MCF 10A (cell line): ENCODE measurements at regions of chr22 and their contacts with region 1.

Region 1: DNA sequence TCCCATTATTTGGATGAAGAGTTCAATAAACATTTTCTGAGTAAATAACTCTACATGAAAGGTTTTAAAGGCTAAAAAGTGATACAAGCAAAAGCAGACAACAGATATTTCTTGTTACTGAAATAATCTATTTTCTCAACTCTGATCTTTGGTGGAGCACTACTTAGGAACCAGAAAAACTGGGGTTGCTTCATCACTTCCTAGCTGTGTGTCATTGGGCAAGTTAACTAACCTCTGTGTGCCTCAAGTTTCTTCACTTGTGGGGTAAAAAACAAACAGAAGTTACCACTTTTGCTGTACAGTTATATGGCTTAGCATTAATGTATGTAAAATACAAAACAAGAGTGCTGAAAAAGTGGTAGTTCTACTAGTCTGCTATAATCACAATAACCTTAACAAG is 5.6 kb downstream of the MAPK1 start:
- DNase-seq: peak; percentile 4
- H3K4me3 Mint-ChIP-seq: no peak overlapping the region
- H3K27ac Mint-ChIP-seq: peak overlapping the region; percentile 85
- H3K4me1 Mint-ChIP-seq: peaks cover 55% of the 10 kb centered on the region
- H3K27me3 Mint-ChIP-seq: no peaks in the 10 kb centered on the region
- CTCF ChIP-seq: no peak

Region 2: GRCh38 chr22:21816787-21817496 is 44.9 kb before region 1 on chr22:
- CTCF ChIA-PET with region 1: interaction called, 3 read pairs
- POLR2A ChIA-PET with region 1: interaction called, 3 read pairs
- intact Hi-C with region 1: loop called (anchors 5 kb)
- DNase-seq: peak; percentile 74
- H3K4me3 Mint-ChIP-seq: peak overlapping the region; percentile 7
- H3K27ac Mint-ChIP-seq: peak overlapping the region; percentile 91
- H3K4me1 Mint-ChIP-seq: peaks cover 26% of the 10 kb centered on the region
- H3K27me3 Mint-ChIP-seq: no peaks in the 10 kb centered on the region
- CTCF ChIP-seq: no peak

Region 3: DNA sequence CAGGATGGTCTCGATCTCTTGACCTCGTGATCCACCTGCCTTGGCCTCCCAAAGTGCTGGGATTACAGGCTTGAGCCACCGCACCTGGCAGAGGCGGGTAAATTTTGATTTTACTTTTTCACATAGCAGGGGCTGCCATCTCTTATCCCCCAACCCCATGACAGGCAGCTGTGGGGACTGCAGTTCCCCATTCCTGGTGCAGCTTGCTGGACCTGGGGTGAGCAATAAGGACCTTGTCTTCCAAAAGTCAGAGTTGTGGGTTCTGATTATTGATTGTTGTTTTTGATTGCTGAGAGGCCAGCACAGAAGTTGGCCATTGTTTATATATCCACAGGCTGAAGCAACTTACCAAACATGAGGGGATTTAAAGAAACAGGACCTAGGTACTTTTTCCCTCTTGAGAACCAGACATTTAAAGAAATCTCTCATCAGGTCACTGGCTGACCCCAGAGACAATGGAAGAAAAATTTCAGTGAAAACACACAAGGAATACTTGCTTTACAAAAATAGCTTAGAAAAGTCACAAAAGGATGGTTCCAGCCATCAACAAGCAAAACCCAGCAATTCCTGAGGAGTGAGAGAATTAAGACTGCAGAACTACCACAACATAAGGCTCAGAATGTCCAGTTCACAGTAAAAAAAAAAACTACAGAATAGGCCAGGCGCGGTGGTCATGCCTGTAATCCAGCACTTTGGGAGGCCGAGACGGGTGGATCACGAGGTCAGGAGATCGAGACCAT is 27.6 kb after region 1 on chr22:
- CTCF ChIA-PET with region 1: no interaction called
- POLR2A ChIA-PET with region 1: no interaction called
- intact Hi-C with region 1: no loop called
- DNase-seq: no peak
- H3K4me3 Mint-ChIP-seq: no peak overlapping the region
- H3K27ac Mint-ChIP-seq: no peak overlapping the region
- H3K4me1 Mint-ChIP-seq: no peaks in the 10 kb centered on the region
- H3K27me3 Mint-ChIP-seq: no peaks in the 10 kb centered on the region
- CTCF ChIP-seq: no peak